OCI-LY7 (cell line): ENCODE measurements at regions of chr6 and their contacts with region 1.

Region 1: GRCh38 chr6:42901536-42901957 is 14.3 kb upstream of the PTCRA start:
- DNase-seq: peak; percentile 90
- H3K4me3 ChIP-seq: no peak overlapping the region
- H3K27ac ChIP-seq: no peak overlapping the region
- H3K4me1 ChIP-seq: peaks cover 10% of the 10 kb centered on the region
- CTCF ChIP-seq: peak; percentile 95

Region 2: DNA sequence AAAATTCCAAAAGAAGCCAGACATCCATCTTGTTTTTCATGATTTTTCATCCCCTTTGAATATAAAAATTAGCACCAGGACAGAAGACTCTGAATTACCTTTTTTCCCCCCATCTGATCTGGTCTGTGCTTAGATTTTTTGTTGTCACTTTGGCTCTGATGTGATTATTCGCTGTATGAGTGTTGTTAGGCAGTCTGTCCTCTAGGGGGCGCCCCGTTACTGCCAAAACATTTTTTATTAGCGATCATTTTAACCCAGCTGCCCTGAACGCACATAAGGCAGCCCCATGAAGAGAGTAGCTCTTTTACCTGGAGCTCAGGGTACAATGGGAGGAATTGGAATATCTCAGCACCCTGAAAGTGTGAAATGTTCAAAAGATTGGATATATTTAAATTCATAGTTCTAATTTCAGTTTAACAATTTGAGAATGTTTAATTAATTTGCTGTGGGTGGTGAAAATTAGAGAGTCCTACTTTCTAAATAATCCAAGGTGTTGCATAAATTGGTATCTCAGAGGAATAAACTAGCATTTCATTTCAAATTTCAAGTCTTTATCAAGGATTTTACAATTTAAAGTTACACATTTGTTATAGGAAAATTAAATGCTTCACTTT is 239.9 kb before region 1 on chr6:
- CTCF ChIA-PET with region 1: no interaction called
- POLR2A ChIA-PET with region 1: no interaction called
- intact Hi-C with region 1: loop called (anchors 1 kb)
- DNase-seq: peak; percentile 81
- H3K4me3 ChIP-seq: no peak overlapping the region
- H3K27ac ChIP-seq: no peak overlapping the region
- H3K4me1 ChIP-seq: no peaks in the 10 kb centered on the region
- CTCF ChIP-seq: peak; percentile 100

Region 3: DNA sequence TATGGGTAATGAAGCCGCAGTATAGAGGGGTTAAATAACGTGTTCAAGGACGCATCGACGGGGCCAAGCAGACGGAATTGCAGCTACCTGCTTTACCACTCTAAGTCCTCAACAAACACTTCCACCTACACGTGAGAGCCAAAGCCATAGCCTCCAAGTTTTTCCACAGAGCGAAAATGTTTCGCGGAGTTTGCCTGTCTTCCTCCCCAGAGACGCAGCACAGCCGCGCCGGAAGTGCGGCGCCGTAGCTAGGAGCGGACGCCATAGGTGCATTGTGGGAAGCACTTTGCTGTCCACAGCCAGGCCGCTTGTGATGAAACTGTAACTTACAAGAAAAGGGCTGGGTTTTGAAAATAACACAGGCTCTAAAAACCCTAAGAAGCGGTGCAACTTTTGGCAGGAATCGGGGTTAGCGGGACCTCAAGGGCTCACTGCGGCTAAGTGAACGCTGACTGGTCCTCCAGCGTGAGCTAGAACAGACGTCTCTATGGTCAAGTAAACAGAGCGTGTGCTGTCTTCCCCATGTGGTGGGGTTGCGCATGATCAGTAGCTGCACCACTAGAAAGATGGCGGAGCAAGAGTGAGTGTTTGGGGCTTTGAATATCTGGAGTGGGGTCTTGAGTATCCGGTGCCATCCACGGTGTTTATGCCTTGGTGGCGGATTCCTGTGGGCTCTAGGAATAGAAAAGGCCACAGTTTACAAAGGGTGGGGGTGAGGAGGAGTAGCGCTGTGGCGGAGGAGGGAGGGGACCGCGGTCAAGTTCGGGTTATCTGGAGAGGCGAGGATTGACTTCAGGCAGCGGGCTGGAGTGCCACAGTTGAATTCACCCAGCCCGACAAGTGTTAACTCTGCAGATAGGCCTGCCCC is 21.9 kb before region 1 on chr6 and contains the start of gene RPL7L1:
- CTCF ChIA-PET with region 1: no interaction called
- POLR2A ChIA-PET with region 1: no interaction called
- intact Hi-C with region 1: loop called (anchors 2 kb)
- DNase-seq: peak; percentile 92
- H3K4me3 ChIP-seq: peak within 1 kb of the TSS; percentile 79
- H3K27ac ChIP-seq: peak within 1 kb of the TSS; percentile 75
- H3K4me1 ChIP-seq: peaks cover 18% of the 10 kb centered on the region
- CTCF ChIP-seq: no peak
- total RNA-seq, gene RPL7L1: 83.2 and 101 TPM in 2 replicates

Region 4: DNA sequence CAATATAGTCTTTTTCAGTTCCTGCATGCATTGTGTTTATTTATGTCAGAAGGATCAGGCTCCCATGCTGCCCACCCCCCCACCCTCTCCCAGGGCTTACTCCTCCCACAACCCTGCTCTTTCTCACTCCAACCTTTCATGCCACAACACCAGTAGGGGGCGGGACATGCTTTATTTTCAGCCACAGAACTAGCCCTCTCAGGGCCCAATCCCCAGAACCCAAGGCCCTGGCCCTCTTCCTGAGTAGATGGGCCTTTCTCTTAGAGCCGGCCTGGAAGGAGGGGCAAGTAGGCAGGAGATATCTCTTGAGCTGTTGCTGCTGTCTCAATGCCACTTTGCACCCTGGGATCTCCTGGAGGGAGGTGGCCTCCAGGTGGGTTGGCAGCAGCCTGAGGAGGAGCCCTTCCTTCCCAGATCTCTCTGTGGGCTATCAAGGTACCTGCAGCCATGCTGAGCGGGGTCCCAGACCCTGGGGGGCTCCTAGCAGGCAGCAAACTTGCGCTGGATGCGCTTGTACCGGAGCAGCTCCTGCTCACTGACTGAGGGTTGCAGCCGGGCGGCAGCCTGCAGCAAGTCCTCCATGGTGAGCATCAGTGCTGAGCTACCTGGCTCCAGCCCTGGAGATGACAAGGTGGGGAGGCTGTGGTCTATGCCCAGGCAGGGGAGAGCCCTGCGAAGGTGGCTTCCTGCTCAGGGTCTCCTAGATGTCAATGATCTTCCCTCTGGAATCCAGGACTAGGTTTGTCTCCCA is 62.5 kb after region 1 on chr6:
- CTCF ChIA-PET with region 1: no interaction called
- POLR2A ChIA-PET with region 1: interaction called, 3 read pairs
- intact Hi-C with region 1: loop called (anchors 1 kb)
- DNase-seq: peak; percentile 58
- H3K4me3 ChIP-seq: no peak overlapping the region
- H3K27ac ChIP-seq: no peak overlapping the region
- H3K4me1 ChIP-seq: no peaks in the 10 kb centered on the region
- CTCF ChIP-seq: peak; percentile 64

Region 5: GRCh38 chr6:43070028-43070632 is 168.6 kb after region 1 on chr6:
- CTCF ChIA-PET with region 1: no interaction called
- POLR2A ChIA-PET with region 1: no interaction called
- intact Hi-C with region 1: loop called (anchors 1 kb)
- DNase-seq: peak; percentile 73
- H3K4me3 ChIP-seq: no peak overlapping the region
- H3K27ac ChIP-seq: no peak overlapping the region
- H3K4me1 ChIP-seq: peaks cover 9% of the 10 kb centered on the region
- CTCF ChIP-seq: peak; percentile 85

Region 6: GRCh38 chr6:43105538-43106220 is 204.1 kb after region 1 on chr6:
- CTCF ChIA-PET with region 1: no interaction called
- POLR2A ChIA-PET with region 1: no interaction called
- intact Hi-C with region 1: no loop called
- DNase-seq: no peak
- H3K4me3 ChIP-seq: no peak overlapping the region
- H3K27ac ChIP-seq: no peak overlapping the region
- H3K4me1 ChIP-seq: no peaks in the 10 kb centered on the region
- CTCF ChIP-seq: no peak

Region 7: GRCh38 chr6:43297644-43298564 is 396.4 kb after region 1 on chr6 and contains the start of gene SLC22A7:
- CTCF ChIA-PET with region 1: no interaction called
- POLR2A ChIA-PET with region 1: no interaction called
- intact Hi-C with region 1: no loop called
- DNase-seq: no peak
- H3K4me3 ChIP-seq: no peak within 1 kb of the TSS
- H3K27ac ChIP-seq: no peak within 1 kb of the TSS
- H3K4me1 ChIP-seq: peaks cover 8% of the 10 kb centered on the region
- CTCF ChIP-seq: no peak
- total RNA-seq, gene SLC22A7: not detected in 2 replicates